ENCODE measurements at regions of chr1 and their contacts with region 1.

Region 1: GRCh38 chr1:30856260-30856790 is 52.2 kb downstream of the SDC3 start:
- DNase-seq: no peak

Region 2: GRCh38 chr1:30707412-30708360 is 148.6 kb before region 1 on chr1:
- intact Hi-C with region 1: no loop called
- DNase-seq: peak; percentile 86

Region 3: DNA sequence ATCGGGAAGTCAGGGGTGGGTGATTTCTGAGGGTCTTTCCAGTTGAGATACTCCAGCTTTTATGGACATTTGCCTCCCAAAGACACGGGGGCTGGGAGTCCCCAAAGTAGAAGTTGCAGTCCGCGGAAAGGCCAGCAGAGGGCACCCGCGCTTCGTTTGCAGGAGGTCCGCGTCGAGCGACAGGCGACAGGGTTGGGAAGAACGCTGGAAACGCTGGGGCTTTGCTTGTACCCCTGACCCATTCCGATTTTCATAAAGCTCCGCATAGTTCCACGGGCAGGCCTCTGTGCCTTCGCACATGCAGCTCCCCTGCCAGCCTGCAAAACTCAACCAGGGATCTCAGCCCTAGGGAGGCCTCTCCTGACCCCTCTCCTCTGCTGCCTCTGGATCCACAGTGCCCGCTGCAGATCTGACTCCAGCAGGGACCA is 54.5 kb before region 1 on chr1:
- intact Hi-C with region 1: loop called (anchors 5 kb)
- DNase-seq: peak; percentile 93

Region 4: GRCh38 chr1:30816211-30817076 is 39.9 kb before region 1 on chr1:
- intact Hi-C with region 1: no loop called
- DNase-seq: no peak

Region 5: DNA sequence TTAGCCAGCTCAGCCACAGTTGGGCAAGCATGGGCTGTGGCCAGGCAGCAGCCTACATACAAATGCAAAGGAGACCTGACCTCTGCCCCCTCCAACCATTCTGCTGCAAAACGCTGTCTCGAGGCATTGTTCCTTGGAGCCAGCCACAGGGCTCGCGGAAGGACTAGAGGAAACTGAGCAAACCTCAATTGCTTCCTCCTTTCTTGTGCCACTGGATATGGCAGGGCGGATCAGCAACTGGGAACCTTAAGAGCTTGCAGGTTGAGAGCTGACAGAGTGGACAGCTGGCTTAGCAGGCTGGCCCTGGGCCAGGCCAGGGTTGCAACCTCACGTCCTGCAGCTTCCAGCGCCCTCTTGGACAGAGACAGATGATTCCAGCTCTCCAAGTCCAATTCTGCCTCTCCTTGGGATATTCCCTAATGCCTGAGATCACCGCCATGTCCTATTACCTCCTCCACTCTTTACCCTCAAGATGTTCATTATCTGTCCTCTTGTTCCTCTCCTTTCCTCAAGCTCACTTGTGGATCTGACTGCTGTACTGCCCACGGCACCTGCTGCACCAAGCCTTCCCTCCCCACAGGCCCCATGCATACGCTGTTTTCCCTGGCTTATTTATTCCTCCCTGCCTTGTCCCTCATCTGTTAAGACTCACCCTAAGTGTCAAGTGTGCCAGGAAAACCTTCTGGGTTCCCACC is 15.3 kb before region 1 on chr1:
- intact Hi-C with region 1: no loop called
- DNase-seq: no peak

Region 6: DNA sequence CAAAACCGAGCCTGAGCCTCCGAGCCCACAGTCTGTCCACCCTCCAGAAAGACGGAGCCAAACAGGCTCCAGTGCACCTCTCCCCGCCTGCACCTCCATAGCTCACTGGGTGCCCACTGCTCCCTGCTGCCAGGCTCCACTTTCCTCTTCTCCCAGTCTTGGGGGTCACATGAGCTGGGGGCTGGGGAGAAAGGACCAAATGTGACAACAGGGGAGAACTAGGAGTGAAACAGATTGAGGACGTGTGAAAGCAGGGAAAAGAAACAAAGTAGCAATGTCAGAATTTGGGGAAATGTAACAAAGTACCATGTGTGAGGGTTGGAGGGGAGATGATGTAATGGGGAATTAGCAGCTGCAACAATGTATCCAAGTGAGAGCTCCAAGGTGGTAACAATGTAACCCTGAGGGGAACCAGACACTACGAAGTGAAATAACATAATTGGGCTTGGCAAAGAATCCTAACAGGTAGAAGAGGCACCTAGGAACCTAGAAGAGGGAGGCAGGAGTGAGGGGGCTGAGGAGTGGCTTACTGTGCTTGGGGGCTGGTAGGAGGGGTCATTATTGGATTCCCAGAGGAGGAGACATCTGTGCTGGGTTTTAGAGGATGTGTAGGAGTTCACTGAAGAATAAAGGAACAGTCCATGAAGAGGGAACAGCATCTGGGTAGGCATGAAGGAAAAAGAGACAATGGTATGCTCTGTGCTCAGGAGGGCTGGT is 39.8 kb after region 1 on chr1:
- intact Hi-C with region 1: loop called (anchors 5 kb)
- DNase-seq: no peak

Measured in cardiac septum (tissue), 1 donor.